ENCODE measurements at regions of chr17 and their contacts with region 1.

Region 1: GRCh38 chr17:4733073-4733531 is 1.9 kb downstream of the MED11 start:
- DNase-seq: no peak
- H3K4me3 Mint-ChIP-seq: peak overlapping the region; percentile 38
- H3K27ac Mint-ChIP-seq: peak overlapping the region; percentile 65
- H3K4me1 Mint-ChIP-seq: peaks cover 57% of the 10 kb centered on the region
- H3K27me3 Mint-ChIP-seq: peaks cover 2% of the 10 kb centered on the region

Region 2: DNA sequence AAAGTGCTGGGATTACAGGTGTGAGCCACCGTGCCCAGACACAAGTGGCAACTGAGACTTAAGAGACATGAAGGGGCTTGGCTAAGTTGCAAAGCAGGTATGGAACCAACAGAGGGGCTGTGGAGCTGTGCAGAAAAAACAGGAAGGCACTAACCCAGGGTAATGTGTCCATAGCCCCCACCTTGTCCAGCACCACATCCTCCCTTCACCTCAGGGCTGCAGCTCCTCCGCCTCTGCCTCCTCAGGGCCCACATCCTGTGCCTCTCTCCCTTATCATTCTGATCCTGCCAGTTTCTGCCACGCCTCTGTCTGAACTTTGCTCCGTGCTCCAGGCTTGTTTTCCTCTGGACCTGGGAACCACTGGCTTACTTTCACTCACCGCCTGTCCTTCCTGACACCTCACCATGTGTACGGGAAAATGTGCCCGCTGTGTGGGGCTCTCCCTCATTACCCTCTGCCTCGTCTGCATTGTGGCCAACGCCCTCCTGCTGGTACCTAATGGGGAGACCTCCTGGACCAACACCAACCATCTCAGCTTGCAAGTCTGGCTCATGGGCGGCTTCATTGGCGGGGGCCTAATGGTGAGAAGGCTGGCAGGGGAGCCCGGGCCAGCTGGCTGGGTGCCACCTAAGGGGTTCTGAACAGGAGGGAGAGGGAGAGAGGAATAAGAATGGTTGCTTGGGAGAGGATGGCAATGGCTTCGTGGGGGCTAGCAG is 38.6 kb after region 1 on chr17 and contains the start of gene TM4SF5:
- intact Hi-C with region 1: no loop called
- DNase-seq: no peak
- H3K4me3 Mint-ChIP-seq: no peak within 1 kb of the TSS
- H3K27ac Mint-ChIP-seq: no peak within 1 kb of the TSS
- H3K4me1 Mint-ChIP-seq: peaks cover 13% of the 10 kb centered on the region
- H3K27me3 Mint-ChIP-seq: peaks cover 25% of the 10 kb centered on the region
- total RNA-seq, gene TM4SF5: not detected in 2 replicates

Region 3: DNA sequence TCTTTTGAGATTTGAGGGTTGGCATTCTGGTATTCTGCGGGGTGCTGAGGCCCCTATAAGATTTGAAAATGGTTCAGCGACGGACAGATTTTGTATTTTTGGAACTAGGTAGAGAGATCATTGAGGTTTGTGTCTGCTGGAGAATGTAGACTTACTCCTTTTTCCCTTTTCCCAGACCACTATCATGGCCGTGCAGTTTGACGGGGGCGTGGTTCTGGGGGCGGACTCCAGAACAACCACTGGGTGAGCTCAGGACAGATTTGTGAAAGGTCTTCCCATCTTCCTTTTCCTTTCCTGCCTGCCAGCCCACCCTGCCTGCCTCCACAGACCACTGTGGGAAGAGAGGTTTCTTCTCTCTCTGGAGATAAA is 63.4 kb after region 1 on chr17:
- intact Hi-C with region 1: loop called (anchors 1 kb)
- DNase-seq: no peak
- H3K4me3 Mint-ChIP-seq: peak overlapping the region; percentile 100
- H3K27ac Mint-ChIP-seq: peak overlapping the region; percentile 99
- H3K4me1 Mint-ChIP-seq: peaks cover 7% of the 10 kb centered on the region
- H3K27me3 Mint-ChIP-seq: peaks cover 9% of the 10 kb centered on the region

Region 4: DNA sequence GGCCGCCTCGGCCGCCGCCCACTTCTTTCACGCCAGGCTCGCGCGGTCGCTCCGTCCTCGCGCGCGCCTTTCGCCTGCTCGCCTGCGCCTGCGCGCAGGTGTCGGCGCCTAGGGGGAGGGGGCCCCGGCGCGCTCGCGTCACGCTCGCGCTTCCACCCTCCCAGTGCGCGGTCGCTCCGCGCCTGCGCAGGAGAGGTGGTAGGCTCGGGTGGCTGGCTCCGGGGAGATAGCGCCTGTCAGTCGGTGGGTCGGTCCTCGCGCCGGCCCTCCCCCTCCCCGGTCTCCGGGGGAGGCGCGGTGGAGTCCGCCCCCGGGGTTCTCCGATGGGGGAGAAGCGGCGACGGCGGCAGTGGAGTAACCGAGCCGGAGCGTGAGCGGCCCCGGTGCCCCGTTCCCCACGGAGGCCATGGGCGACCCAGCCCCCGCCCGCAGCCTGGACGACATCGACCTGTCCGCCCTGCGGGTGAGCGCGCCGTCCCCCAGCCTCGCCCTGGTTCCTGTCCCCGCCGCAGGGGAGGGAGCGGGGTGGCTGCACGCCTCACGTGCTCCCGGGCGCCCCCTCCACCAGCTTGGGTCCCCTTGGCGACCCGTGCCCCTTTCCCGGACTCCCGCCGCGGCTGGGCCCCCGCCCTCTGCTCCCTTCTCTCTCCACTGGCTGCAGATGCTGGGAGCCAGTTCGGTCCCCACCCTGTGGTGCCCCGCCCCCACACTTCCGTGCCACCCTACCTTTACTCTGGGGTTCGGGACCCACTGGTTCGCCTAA is 100.3 kb after region 1 on chr17 and contains the start of gene MINK1:
- intact Hi-C with region 1: loop called (anchors 1 kb)
- DNase-seq: peak; percentile 90
- H3K4me3 Mint-ChIP-seq: peak within 1 kb of the TSS; percentile 93
- H3K27ac Mint-ChIP-seq: peak within 1 kb of the TSS; percentile 99
- H3K4me1 Mint-ChIP-seq: peaks cover 36% of the 10 kb centered on the region
- H3K27me3 Mint-ChIP-seq: no peaks in the 10 kb centered on the region
- total RNA-seq, gene MINK1: 66.5 and 67.5 TPM in 2 replicates

Region 5: DNA sequence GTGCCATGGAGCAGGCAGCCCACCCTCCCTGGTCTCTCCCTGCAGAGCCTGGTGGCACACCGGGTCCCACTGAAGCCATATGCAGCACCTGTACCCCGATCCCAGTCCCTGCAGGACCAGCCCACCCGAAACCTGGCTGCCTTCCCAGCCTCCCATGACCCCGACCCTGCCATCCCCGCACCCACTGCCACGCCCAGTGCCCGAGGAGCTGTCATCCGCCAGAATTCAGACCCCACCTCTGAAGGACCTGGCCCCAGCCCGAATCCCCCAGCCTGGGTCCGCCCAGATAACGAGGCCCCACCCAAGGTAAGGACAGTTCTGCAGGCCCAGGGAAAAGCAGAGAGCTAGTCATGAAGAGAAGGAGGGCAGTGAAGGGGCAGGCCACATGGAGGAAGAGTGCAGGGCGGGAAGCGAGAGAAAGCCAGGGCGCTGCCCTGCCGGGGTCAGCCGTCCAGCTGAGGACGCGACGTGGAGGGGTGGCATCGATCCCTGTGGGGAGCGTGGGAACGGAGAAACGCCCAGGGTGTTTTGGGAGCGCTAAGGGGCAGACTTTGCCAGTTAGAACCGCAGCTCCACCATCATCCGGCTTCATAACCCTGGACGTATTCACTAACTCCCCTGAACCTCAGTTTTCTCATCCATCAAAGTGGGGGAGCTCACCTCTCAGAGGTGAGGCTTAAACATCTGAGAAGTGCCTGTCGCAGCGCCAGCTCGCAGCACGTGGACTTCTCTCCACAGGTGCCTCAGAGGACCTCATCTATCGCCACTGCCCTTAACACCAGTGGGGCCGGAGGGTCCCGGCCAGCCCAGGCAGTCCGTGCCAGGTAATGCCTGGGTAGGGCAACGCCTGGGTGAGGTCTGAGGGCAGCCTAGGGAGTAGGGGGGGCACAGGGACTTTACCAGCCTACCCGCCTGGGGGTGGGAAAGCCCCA is 158.6 kb after region 1 on chr17:
- intact Hi-C with region 1: loop called (anchors 2 kb)
- DNase-seq: no peak
- H3K4me3 Mint-ChIP-seq: no peak overlapping the region
- H3K27ac Mint-ChIP-seq: no peak overlapping the region
- H3K4me1 Mint-ChIP-seq: peaks cover 5% of the 10 kb centered on the region
- H3K27me3 Mint-ChIP-seq: no peaks in the 10 kb centered on the region

Region 6: GRCh38 chr17:4939796-4940624 is 206.9 kb after region 1 on chr17 and contains the starts of genes RNF167 and SLC25A11:
- intact Hi-C with region 1: loop called (anchors 2 kb)
- DNase-seq: peak; percentile 98
- H3K4me3 Mint-ChIP-seq: peak within 1 kb of the TSS; percentile 100
- H3K27ac Mint-ChIP-seq: peak within 1 kb of the TSS; percentile 94
- H3K4me1 Mint-ChIP-seq: peaks cover 56% of the 10 kb centered on the region
- H3K27me3 Mint-ChIP-seq: no peaks in the 10 kb centered on the region
- total RNA-seq, gene RNF167: 138 and 140 TPM in 2 replicates
- total RNA-seq, gene SLC25A11: 111 and 116 TPM in 2 replicates

Region 7: DNA sequence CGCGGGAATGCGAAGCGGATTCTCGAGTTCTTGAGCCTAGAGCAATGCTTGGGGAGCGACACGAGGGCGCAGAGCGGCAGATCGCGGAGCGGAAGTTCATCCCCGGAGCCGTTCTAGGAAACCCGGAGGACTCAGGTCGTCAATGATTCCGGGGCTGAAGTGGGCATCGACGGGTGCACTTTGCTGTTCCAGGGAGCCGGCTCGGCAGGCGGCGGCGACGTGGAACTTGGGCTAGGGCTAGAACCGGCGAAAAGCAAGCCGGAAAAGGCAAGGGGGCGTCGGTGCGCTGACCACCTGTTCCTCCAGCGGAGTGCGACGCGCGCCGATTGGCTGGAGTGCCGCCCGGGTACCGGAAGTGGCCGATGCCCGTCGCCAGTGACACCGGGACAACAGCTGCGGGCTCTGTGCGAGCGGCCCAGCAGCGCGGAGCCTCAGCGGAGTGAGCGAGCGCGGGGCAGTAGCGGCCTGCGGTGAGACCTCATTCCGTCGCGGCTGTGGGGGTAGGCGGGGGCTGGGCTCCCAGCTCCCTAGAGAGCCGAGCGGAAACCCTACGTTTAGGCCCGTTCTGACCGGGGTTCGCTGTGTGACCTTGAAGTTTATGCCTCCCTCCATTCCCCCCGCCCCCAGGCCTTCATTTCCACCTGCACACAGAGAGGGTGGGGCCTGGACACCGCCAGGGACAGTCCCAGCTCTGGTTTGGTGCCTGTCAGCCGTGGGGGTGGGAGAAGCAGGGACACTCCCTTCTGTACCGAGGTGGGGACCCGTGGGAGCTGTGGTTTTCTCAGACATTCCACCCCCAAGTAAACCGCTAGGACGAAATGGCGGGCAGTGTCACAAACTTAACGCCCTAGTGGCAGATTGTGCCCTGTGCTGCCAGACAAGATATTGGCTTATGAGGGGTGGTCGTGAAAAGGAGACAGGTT is 345.3 kb after region 1 on chr17 and contains the start of gene ZFP3:
- intact Hi-C with region 1: no loop called
- DNase-seq: peak; percentile 72
- H3K4me3 Mint-ChIP-seq: peak within 1 kb of the TSS; percentile 81
- H3K27ac Mint-ChIP-seq: peak within 1 kb of the TSS; percentile 86
- H3K4me1 Mint-ChIP-seq: peaks cover 17% of the 10 kb centered on the region
- H3K27me3 Mint-ChIP-seq: peaks cover 2% of the 10 kb centered on the region
- total RNA-seq, gene ZFP3: 1.9 and 2.0 TPM in 2 replicates

Measured in activated T-helper 1 cell treated with anti-CD3 and anti-CD28 coated beads, Interleukin-12 subunit alpha, Interleukin-12 subunit beta, Interleukin-2, Interleukin-4 antibody, amounts not matched to agents 30 ng/mL and 10 ng/mL and 1 ng/mL, durations not matched to agents 14 hours and 24 hours and 36 hours (primary cell).